Spleen (tissue), 13 donors: ENCODE measurements at regions of chr19 and their contacts with region 1.

Region 1: GRCh38 chr19:53424968-53425597 is 6.7 kb upstream of the ZNF761 start:
- DNase-seq: peak; percentile 83
- H3K4me3 ChIP-seq: no peak overlapping the region
- H3K27ac ChIP-seq: peak overlapping the region in 2 of 8 donors; percentile 8 to 27
- H3K4me1 ChIP-seq: peaks cover 0 to 8% (median 0%) of the 10 kb centered on the region in 6 donors
- H3K27me3 ChIP-seq: no peaks in the 10 kb centered on the region
- CTCF ChIP-seq: peak; percentile 55 to 91 (median 80)
- POLR2A ChIP-seq: no peak

Region 2: GRCh38 chr19:53394974-53395839 is 29.9 kb before region 1 on chr19 and contains the start of gene ZNF765:
- intact Hi-C with region 1: no loop called
- DNase-seq: peak; percentile 98
- H3K4me3 ChIP-seq: peak within 1 kb of the TSS; percentile 63 to 89 (median 80)
- H3K27ac ChIP-seq: peak within 1 kb of the TSS; percentile 46 to 88 (median 82)
- H3K4me1 ChIP-seq: peaks cover 6 to 30% (median 24%) of the 10 kb centered on the region in 6 donors
- H3K27me3 ChIP-seq: no peaks in the 10 kb centered on the region
- CTCF ChIP-seq: peak; percentile 22 to 91 (median 73)
- POLR2A ChIP-seq: peak in 1 of 3 donors; percentile 44
- total RNA-seq, gene ZNF765: 9.3 to 15.9 (median 12.1) TPM

Region 3: DNA sequence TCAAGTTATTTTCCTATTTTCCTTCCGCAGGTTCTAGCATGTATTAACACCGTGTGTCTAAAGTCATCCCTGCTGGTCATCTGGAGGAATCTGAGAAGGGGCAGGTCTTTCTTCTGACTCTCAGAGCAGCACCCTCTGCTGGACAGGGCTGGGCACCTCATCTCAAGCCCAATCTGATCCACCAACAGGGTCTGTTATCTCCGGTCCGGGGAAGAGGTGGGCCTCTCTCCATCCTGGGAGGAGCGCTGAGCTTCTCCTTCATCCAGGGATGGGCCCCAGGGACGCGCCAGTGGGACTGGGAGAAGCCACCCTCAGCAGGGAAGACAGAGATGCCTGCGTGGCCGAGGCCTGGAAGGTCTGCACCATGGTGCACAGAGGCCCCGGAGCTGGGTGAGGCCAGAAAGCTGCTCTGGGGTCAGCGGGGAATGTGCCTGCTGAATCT is 86.9 kb after region 1 on chr19:
- intact Hi-C with region 1: loop called (anchors 10 kb)
- DNase-seq: no peak
- H3K4me3 ChIP-seq: no peak overlapping the region
- H3K27ac ChIP-seq: no peak overlapping the region
- H3K4me1 ChIP-seq: peaks cover 0 to 5% (median 0%) of the 10 kb centered on the region in 6 donors
- H3K27me3 ChIP-seq: no peaks in the 10 kb centered on the region
- CTCF ChIP-seq: peak; percentile 33 to 76 (median 62)
- POLR2A ChIP-seq: no peak